Left lung (tissue), 14 donors: ENCODE measurements at regions of chr5 and their contacts with region 1.

Region 1: DNA sequence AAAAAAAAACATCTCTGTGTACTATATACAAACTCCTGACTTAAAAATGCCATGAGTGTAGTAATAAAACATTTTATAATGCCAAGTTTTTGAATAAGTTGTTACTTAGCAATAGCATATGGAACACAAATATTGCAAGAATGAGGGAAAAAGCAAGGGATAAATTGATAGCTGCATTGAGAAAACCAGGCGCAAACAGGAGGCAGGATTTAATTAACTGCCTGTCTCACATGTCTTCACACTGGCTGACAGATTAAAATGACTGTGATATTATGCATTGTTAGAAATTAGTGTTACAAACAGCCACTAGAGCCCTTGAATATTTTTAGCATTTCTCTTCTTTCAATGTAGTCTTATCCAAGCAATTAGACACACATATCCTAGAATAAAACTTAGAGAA is 1817.5 kb upstream of the NUDT12 start:
- DNase-seq: peak in 2 of 4 donors; percentile 3 to 8
- ATAC-seq: no peak
- H3K4me3 ChIP-seq: no peak overlapping the region
- H3K27ac ChIP-seq: no peak overlapping the region
- H3K4me1 ChIP-seq: no peaks in the 10 kb centered on the region
- H3K27me3 ChIP-seq: no peaks in the 10 kb centered on the region
- CTCF ChIP-seq: no peak

Region 2: DNA sequence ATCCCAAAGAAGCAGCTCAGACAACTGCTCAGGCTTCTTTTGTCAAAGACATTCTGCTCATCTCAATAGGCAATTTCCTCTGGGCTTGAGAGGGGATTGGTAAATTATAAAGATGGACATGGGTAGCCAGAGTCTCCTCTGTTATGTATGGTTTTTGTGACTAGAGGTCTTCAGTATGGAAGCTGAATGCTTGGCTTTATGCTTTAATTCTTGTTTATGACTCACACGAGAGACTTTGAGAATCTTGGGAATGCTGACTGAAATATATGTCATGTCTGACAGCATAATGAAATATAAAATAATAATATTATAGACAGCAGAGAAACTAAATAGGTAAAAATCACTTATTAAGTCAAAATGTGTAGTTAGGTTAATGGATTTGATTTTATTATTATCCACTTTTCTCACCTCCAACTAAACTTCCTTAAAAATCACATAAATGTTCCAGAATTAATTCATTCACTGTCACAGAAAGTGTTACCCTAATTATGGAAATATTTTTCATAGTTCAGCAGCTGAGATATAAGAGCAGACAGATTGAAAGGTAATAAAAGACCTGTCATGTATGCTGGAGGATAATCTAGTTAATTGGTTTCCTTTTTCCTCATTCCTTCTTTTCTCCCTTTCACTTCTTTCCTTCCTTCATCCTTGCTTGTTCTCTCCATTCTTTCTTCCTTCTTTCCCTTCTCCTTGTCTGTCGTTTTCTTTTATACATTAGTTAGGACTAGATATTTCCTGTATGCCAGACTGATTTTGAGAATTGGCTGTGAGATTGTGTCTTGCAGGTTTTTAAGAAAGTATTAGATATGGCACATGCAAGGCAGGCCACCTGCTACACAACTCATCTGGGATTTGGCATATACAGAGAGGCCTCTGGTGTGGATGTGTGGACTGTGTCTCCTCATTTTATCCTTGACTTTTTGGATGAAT is 48.6 kb after region 1 on chr5:
- intact Hi-C with region 1: loop called in 1 of 2 experiments (anchors 5 kb)
- DNase-seq: no peak
- ATAC-seq: no peak
- H3K4me3 ChIP-seq: no peak overlapping the region
- H3K27ac ChIP-seq: no peak overlapping the region
- H3K4me1 ChIP-seq: no peaks in the 10 kb centered on the region
- H3K27me3 ChIP-seq: no peaks in the 10 kb centered on the region
- CTCF ChIP-seq: no peak